ENCODE measurements at regions of chr11 and their contacts with region 1.

Region 1: DNA sequence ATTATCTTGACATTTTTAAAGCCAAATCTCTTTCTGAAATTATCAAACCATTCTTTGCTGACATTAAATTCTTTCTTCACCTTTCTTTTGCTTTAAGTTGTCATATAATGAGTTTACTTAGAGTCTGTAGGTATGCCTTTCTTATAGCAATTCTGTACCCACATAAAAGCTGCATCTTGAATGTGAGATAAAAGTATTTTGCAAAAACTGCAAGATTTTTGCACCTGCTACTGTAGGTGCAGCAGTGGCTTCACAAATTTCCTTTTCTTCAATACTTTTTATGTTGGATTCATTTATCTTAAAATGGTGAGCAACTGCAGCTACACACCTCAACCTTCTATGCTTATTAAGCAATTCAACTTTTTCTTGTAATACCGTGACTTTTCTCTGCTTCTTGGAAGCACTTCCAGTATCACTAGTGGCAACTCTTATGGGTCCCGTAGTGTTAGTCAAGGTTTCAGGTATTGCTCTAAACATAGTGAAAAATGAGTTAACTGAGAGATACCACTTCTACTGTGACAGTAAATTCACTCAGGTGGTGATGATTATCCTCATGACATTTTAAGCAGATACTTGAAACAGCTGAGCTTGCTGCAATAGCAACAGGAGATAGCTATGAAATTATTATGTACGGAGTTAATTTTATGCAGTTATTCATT is 18.8 kb downstream of the ZFP91 start:
- DNase-seq: no peak
- ATAC-seq: no peak
- H3K4me3 ChIP-seq: no peak overlapping the region
- H3K27ac ChIP-seq: no peak overlapping the region
- H3K4me1 ChIP-seq: peaks cover 63 to 73% of the 10 kb centered on the region in 2 donors
- H3K27me3 ChIP-seq: no peaks in the 10 kb centered on the region
- CTCF ChIP-seq: no peak
- POLR2A ChIP-seq: no peak

Region 2: GRCh38 chr11:58629857-58630256 is 32.2 kb after region 1 on chr11:
- in situ Hi-C with region 1: no loop called
- intact Hi-C with region 1: loop called (anchors 2 kb)
- DNase-seq: no peak
- ATAC-seq: peak in 1 of 2 donors; percentile 37
- H3K4me3 ChIP-seq: no peak overlapping the region
- H3K27ac ChIP-seq: no peak overlapping the region
- H3K4me1 ChIP-seq: peaks cover 30 to 42% of the 10 kb centered on the region in 2 donors
- H3K27me3 ChIP-seq: no peaks in the 10 kb centered on the region
- CTCF ChIP-seq: peak in 4 of 5 experiments; percentile 25 to 49 (median 34)
- POLR2A ChIP-seq: no peak

Measured in gastrocnemius medialis (tissue), 4 donors.